ENCODE measurements at regions of chr1 and their contacts with region 1.

Region 1: GRCh38 chr1:155562581-155563376 is at the start of gene ASH1L:
- DNase-seq: peak; percentile 88 to 95 (median 92)
- H3K4me3 ChIP-seq: peak within 1 kb of the TSS; percentile 73 to 99 (median 89)
- H3K27ac ChIP-seq: peak within 1 kb of the TSS; percentile 91 to 100 (median 98)
- H3K27me3 ChIP-seq: no peaks in the 10 kb centered on the region
- CTCF ChIP-seq: peak in 3 of 56 donors; percentile 12 to 27 (median 16)
- total RNA-seq, gene ASH1L: 98.7 to 145 (median 120) TPM

Region 2: DNA sequence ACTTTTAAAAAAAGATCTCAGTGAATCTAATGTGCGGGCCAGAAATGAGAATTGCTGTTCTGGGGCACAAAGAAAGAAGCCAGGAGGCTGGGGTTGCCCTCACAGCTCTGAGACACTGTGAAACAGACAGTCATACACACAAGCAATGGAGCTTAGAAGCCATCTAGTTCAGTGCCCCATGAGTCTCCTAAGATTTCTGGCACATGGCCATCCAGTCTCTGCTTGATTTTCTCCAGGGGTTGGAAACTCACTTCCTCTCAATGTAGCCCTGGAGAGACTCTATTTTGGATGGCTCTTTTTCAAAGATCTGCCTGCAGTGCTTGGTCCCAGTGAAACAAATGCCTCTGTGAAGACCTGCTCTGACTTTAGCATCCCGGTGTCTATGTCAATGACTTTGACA is 731.3 kb before region 1 on chr1:
- intact Hi-C with region 1: no loop called
- DNase-seq: no peak
- H3K4me3 ChIP-seq: no peak overlapping the region
- H3K27ac ChIP-seq: no peak overlapping the region
- H3K27me3 ChIP-seq: no peaks in the 10 kb centered on the region
- CTCF ChIP-seq: no peak

Region 3: GRCh38 chr1:155308493-155309422 is 254.0 kb before region 1 on chr1 and contains the start of gene FDPS:
- intact Hi-C with region 1: loop called in 1 of 2 experiments (anchors 1 kb)
- DNase-seq: peak; percentile 99 to 100 (median 100)
- H3K4me3 ChIP-seq: peak within 1 kb of the TSS; percentile 61 to 100 (median 86)
- H3K27ac ChIP-seq: peak within 1 kb of the TSS; percentile 74 to 98 (median 94)
- H3K27me3 ChIP-seq: no peaks in the 10 kb centered on the region
- CTCF ChIP-seq: peak in 42 of 56 donors; percentile 9 to 67 (median 41)
- total RNA-seq, gene FDPS: 72.8 to 199 (median 118) TPM

Region 4: GRCh38 chr1:155479205-155479604 is 83.6 kb before region 1 on chr1:
- intact Hi-C with region 1: loop called in 1 of 2 experiments (anchors 10 kb)
- DNase-seq: no peak
- H3K4me3 ChIP-seq: no peak overlapping the region
- H3K27ac ChIP-seq: peak overlapping the region in 1 of 59 donors; percentile 33
- H3K27me3 ChIP-seq: no peaks in the 10 kb centered on the region
- CTCF ChIP-seq: no peak

Region 5: GRCh38 chr1:155499953-155500639 is 62.7 kb before region 1 on chr1:
- intact Hi-C with region 1: no loop called
- DNase-seq: peak in 1 of 10 donors; percentile 29
- H3K4me3 ChIP-seq: peak overlapping the region in 33 of 59 donors; percentile 0 to 49 (median 17)
- H3K27ac ChIP-seq: peak overlapping the region in 43 of 59 donors; percentile 2 to 75 (median 39)
- H3K27me3 ChIP-seq: no peaks in the 10 kb centered on the region
- CTCF ChIP-seq: no peak

Measured in dorsolateral prefrontal cortex (tissue), 120 donors.